HepG2 (cell line): ENCODE measurements at regions of chr17 and their contacts with region 1.

Region 1: GRCh38 chr17:58517734-58518609 is 3.5 kb upstream of the MTMR4 start:
- DNase-seq: peak; percentile 100
- ATAC-seq: peak; percentile 88
- H3K4me3 ChIP-seq: peak overlapping the region; percentile 80 to 98 (median 92)
- H3K27ac ChIP-seq: peak overlapping the region; percentile 96
- H3K4me1 ChIP-seq: peaks cover 56% of the 10 kb centered on the region
- H3K27me3 ChIP-seq: no peaks in the 10 kb centered on the region; a peak in 2 of 5 replicates
- CTCF ChIP-seq: no peak
- EP300 ChIP-seq: peak; percentile 37 to 51; a peak in 3 of 4 replicates
- POLR2A ChIP-seq: peak; percentile 86
- RAD21 ChIP-seq: no peak

Region 2: GRCh38 chr17:58531661-58532554 is 13.9 kb after region 1 on chr17:
- CTCF ChIA-PET with region 1: no interaction called
- POLR2A ChIA-PET with region 1: interaction called, 56 read pairs
- in situ Hi-C with region 1: no loop called
- intact Hi-C with region 1: no loop called
- DNase-seq: no peak
- ATAC-seq: peak; percentile 77
- H3K4me3 ChIP-seq: peak overlapping the region; percentile 35 to 68 (median 48); a peak in 5 of 6 replicates
- H3K27ac ChIP-seq: no peak overlapping the region
- H3K4me1 ChIP-seq: peaks cover 65% of the 10 kb centered on the region
- H3K27me3 ChIP-seq: peaks cover 9 to 53% of the 10 kb centered on the region in 2 experiments; a peak in 3 of 5 replicates
- CTCF ChIP-seq: no peak
- EP300 ChIP-seq: no peak
- POLR2A ChIP-seq: no peak
- RAD21 ChIP-seq: no peak; the same call in 1 of the 2 replicates

Region 3: DNA sequence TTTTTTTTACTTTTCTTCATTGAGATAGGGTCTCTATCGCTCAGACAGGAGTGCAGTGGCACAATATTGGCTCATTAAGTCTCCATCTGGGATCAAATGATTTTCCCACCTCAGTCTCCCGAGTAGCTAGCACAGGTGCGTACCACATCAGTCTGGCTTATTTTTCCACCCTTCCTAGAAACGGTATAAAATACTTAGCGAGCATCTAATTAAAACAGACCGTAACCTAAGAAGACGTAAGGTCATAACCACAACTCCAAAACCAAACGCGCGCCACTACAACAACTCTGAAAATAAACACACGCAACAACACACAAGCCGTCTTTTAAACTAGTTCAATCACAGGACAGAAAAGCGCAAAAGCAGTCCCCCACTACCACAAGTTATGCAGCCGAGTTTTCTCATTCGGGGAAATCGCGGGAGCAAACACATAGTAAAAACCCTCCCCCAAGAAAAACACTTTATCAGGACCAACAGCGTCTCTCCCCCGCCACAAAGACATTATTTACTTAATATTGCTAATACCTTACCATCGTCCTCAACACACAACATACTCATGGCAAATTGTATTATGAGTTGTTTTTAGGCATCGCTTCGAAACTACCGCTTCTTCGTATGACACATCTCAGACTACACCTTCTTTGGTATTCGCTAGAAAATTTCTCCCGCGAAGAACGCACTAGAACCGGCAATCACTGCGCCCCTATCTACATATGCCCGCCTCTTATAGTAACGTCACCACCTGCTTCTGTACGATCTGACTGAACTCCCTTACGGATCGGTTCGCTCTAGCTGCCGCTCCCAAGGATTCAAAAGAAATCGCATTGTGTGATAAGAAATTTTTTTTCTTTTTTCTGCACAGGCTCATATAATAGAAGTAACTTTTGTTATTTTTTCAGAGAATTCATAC is 141.1 kb after region 1 on chr17:
- CTCF ChIA-PET with region 1: no interaction called
- POLR2A ChIA-PET with region 1: interaction called, 12 read pairs
- in situ Hi-C with region 1: no loop called
- intact Hi-C with region 1: loop called (anchors 1 kb)
- DNase-seq: peak; percentile 95
- ATAC-seq: peak; percentile 88
- H3K4me3 ChIP-seq: peak overlapping the region; percentile 33 to 59 (median 35)
- H3K27ac ChIP-seq: peak overlapping the region; percentile 88
- H3K4me1 ChIP-seq: peaks cover 14% of the 10 kb centered on the region
- H3K27me3 ChIP-seq: no peaks in the 10 kb centered on the region
- CTCF ChIP-seq: peak; percentile 11; the same call in 1 of the 2 replicates
- EP300 ChIP-seq: peak; percentile 74 to 78; a peak in 2 of 4 replicates
- POLR2A ChIP-seq: peak; percentile 99 to 100
- RAD21 ChIP-seq: peak; percentile 90

Region 4: GRCh38 chr17:58710936-58711775 is 193.2 kb after region 1 on chr17:
- CTCF ChIA-PET with region 1: no interaction called
- POLR2A ChIA-PET with region 1: interaction called, 3 read pairs
- in situ Hi-C with region 1: no loop called
- intact Hi-C with region 1: loop called (anchors 5 kb)
- DNase-seq: peak; percentile 56
- ATAC-seq: no peak
- H3K4me3 ChIP-seq: no peak overlapping the region
- H3K27ac ChIP-seq: no peak overlapping the region
- H3K4me1 ChIP-seq: no peaks in the 10 kb centered on the region
- H3K27me3 ChIP-seq: no peaks in the 10 kb centered on the region
- CTCF ChIP-seq: peak; percentile 68
- EP300 ChIP-seq: no peak
- POLR2A ChIP-seq: no peak
- RAD21 ChIP-seq: peak; percentile 66; the same call in 1 of the 2 replicates

Region 5: DNA sequence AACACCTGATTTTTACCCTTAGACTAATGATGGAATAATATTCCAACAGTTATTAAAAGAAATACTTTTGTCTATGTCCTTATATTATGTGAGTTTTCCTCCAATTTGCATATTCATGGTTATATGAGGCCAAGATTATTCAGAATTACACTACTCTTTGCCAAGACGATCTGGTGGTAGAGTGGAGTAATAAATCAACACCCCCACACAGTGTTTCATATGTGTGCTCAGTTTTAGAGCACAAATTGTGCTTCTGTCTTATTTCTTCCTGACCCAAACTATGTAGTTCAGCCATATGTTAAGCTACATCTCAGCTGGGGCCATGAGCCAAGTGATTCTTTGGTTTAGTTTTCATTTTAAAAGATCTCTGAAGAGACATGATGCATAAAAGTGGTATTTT is 210.8 kb after region 1 on chr17:
- CTCF ChIA-PET with region 1: no interaction called
- POLR2A ChIA-PET with region 1: no interaction called
- in situ Hi-C with region 1: no loop called
- intact Hi-C with region 1: no loop called
- DNase-seq: no peak
- ATAC-seq: no peak
- H3K4me3 ChIP-seq: no peak overlapping the region
- H3K27ac ChIP-seq: no peak overlapping the region
- H3K4me1 ChIP-seq: no peaks in the 10 kb centered on the region
- H3K27me3 ChIP-seq: no peaks in the 10 kb centered on the region; a peak in 1 of 5 replicates
- CTCF ChIP-seq: no peak
- EP300 ChIP-seq: no peak
- POLR2A ChIP-seq: no peak
- RAD21 ChIP-seq: no peak